Activated CD4-positive, alpha-beta memory T cell treated with anti-CD3 and anti-CD28 coated beads for 36 hours (primary cell): ENCODE measurements at regions of chr7 and their contacts with region 1.

Region 1: GRCh38 chr7:5557920-5558401 is 134.3 kb upstream of the TNRC18 start:
- DNase-seq: no peak
- H3K4me3 Mint-ChIP-seq: peak overlapping the region; percentile 58
- H3K27ac Mint-ChIP-seq: peak overlapping the region; percentile 85
- H3K4me1 Mint-ChIP-seq: peaks cover 40% of the 10 kb centered on the region
- H3K27me3 Mint-ChIP-seq: no peaks in the 10 kb centered on the region

Region 2: GRCh38 chr7:5396999-5397663 is 160.8 kb before region 1 on chr7:
- CTCF ChIA-PET with region 1: no interaction called
- POLR2A ChIA-PET with region 1: no interaction called
- intact Hi-C with region 1: loop called (anchors 2 kb)
- DNase-seq: peak; percentile 95
- H3K4me3 Mint-ChIP-seq: peak overlapping the region; percentile 80
- H3K27ac Mint-ChIP-seq: peak overlapping the region; percentile 96
- H3K4me1 Mint-ChIP-seq: peaks cover 35% of the 10 kb centered on the region
- H3K27me3 Mint-ChIP-seq: no peaks in the 10 kb centered on the region

Region 3: GRCh38 chr7:5445981-5446594 is 111.9 kb before region 1 on chr7:
- CTCF ChIA-PET with region 1: no interaction called
- POLR2A ChIA-PET with region 1: no interaction called
- intact Hi-C with region 1: no loop called
- DNase-seq: no peak
- H3K4me3 Mint-ChIP-seq: no peak overlapping the region
- H3K27ac Mint-ChIP-seq: no peak overlapping the region
- H3K4me1 Mint-ChIP-seq: no peaks in the 10 kb centered on the region
- H3K27me3 Mint-ChIP-seq: no peaks in the 10 kb centered on the region

Region 4: GRCh38 chr7:5526100-5526905 is 31.7 kb before region 1 on chr7:
- CTCF ChIA-PET with region 1: interaction called, 32 read pairs
- POLR2A ChIA-PET with region 1: no interaction called
- intact Hi-C with region 1: no loop called
- DNase-seq: peak; percentile 60
- H3K4me3 Mint-ChIP-seq: peak overlapping the region; percentile 97
- H3K27ac Mint-ChIP-seq: peak overlapping the region; percentile 94
- H3K4me1 Mint-ChIP-seq: peaks cover 33% of the 10 kb centered on the region
- H3K27me3 Mint-ChIP-seq: peaks cover 11% of the 10 kb centered on the region

Region 5: GRCh38 chr7:5539013-5539411 is 18.9 kb before region 1 on chr7:
- CTCF ChIA-PET with region 1: interaction called, 10 read pairs
- POLR2A ChIA-PET with region 1: no interaction called
- intact Hi-C with region 1: no loop called
- DNase-seq: no peak
- H3K4me3 Mint-ChIP-seq: no peak overlapping the region
- H3K27ac Mint-ChIP-seq: no peak overlapping the region
- H3K4me1 Mint-ChIP-seq: peaks cover 6% of the 10 kb centered on the region
- H3K27me3 Mint-ChIP-seq: no peaks in the 10 kb centered on the region

Region 6: DNA sequence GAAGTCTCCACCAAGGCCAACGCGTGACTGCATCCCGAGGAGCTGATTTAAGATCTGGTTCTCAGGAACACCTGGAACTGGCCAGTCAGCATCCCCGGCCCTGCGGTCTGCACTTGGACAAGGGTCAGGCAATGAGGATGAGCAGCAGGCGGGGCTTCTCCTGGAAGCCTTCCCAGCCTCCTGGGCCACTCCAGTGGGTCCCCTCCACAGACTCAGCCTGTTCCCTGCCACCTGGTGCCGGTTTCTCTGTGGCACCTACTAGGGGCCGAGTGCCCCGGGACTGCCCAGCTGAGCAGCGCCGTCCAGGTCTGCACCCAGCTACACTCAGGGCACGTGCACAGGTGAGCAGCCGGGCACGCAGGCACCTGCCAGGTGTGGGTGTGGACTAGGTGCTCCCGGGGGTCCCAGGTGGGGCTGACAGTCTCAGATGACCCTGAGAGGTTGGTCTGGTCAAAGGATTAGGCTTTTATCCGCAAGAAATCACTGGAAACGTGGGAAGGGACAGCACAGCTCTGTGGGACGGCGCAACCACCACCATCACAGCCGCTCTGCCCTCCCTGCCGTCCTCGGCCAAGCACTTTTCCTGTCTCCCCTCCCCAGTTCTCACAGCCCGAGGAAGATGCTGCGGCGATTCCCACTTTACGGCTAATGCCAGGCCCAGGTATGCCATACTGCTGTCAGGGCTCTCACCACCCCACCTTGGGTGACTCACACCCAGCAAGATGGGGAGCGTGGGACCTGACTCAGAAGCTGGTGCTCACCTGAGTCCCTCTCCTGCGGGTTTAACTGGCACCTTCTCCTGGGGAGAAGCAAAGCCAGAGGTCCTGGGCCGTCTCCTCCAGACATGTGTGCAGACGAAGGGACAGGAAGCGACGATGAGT is 57.5 kb after region 1 on chr7:
- CTCF ChIA-PET with region 1: no interaction called
- POLR2A ChIA-PET with region 1: no interaction called
- intact Hi-C with region 1: no loop called
- DNase-seq: no peak
- H3K4me3 Mint-ChIP-seq: no peak overlapping the region
- H3K27ac Mint-ChIP-seq: no peak overlapping the region
- H3K4me1 Mint-ChIP-seq: no peaks in the 10 kb centered on the region
- H3K27me3 Mint-ChIP-seq: no peaks in the 10 kb centered on the region

Region 7: GRCh38 chr7:5677538-5678294 is 119.8 kb after region 1 on chr7:
- CTCF ChIA-PET with region 1: interaction called, 21 read pairs
- POLR2A ChIA-PET with region 1: no interaction called
- intact Hi-C with region 1: no loop called
- DNase-seq: peak; percentile 70
- H3K4me3 Mint-ChIP-seq: no peak overlapping the region
- H3K27ac Mint-ChIP-seq: peak overlapping the region; percentile 20
- H3K4me1 Mint-ChIP-seq: peaks cover 42% of the 10 kb centered on the region
- H3K27me3 Mint-ChIP-seq: no peaks in the 10 kb centered on the region

Region 8: GRCh38 chr7:5704534-5704922 is 146.6 kb after region 1 on chr7:
- CTCF ChIA-PET with region 1: interaction called, 10 read pairs
- POLR2A ChIA-PET with region 1: interaction called, 3 read pairs
- intact Hi-C with region 1: no loop called
- DNase-seq: peak; percentile 85
- H3K4me3 Mint-ChIP-seq: no peak overlapping the region
- H3K27ac Mint-ChIP-seq: no peak overlapping the region
- H3K4me1 Mint-ChIP-seq: peaks cover 73% of the 10 kb centered on the region
- H3K27me3 Mint-ChIP-seq: no peaks in the 10 kb centered on the region